A673 (cell line): ENCODE measurements at regions of chr2 and their contacts with region 1.

Region 1: DNA sequence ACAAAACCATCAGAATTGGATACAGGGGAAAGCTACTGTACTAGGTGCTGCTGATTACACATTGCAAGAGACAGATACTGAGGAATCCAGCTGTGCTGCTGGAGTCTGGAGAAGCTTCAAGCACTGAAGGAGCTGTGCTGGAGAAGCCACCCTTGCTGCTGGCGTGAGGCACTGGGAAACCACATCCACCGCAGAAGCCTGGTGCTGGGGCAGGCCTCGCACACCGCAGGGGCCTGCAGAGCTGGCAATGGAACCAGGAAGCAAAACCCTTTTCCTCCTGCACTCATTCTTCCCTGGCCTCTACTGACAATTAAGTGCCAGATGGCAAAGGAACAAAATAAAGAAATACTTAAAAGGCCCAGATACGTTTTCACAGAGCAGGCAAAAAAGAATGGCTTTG is 94.4 kb upstream of the MSH6 start:
- DNase-seq: peak; percentile 14
- H3K4me3 ChIP-seq: no peak overlapping the region
- H3K27ac ChIP-seq: no peak overlapping the region
- H3K4me1 ChIP-seq: no peaks in the 10 kb centered on the region
- H3K27me3 ChIP-seq: no peaks in the 10 kb centered on the region
- CTCF ChIP-seq: no peak

Region 2: GRCh38 chr2:47534179-47534919 is 154.2 kb before region 1 on chr2:
- CTCF ChIA-PET with region 1: no interaction called
- POLR2A ChIA-PET with region 1: interaction called, 11 read pairs
- intact Hi-C with region 1: no loop called
- DNase-seq: peak; percentile 82
- H3K4me3 ChIP-seq: no peak overlapping the region
- H3K27ac ChIP-seq: no peak overlapping the region
- H3K4me1 ChIP-seq: peaks cover 15% of the 10 kb centered on the region
- H3K27me3 ChIP-seq: no peaks in the 10 kb centered on the region
- CTCF ChIP-seq: no peak

Region 3: DNA sequence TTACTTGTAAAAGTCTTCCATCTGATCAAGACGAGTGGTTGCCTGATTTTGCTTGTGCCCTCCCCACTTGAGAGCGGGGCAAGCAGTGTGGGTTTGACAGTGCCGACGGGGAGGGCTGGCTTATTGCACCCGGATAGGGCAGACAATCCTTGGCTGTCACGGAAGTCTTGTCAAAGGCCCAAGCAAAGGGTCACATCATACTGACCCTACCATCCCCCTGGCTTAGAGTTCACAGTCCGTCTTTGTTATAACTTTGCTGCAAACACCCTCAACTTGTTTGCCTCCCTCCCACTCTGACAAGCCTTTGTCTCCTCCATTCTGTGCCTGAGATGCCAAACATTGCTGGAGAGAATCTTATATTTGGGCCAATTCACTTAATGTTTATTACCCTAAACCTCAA is 71.5 kb before region 1 on chr2:
- CTCF ChIA-PET with region 1: no interaction called
- POLR2A ChIA-PET with region 1: no interaction called
- intact Hi-C with region 1: no loop called
- DNase-seq: no peak
- H3K4me3 ChIP-seq: no peak overlapping the region
- H3K27ac ChIP-seq: no peak overlapping the region
- H3K4me1 ChIP-seq: no peaks in the 10 kb centered on the region
- H3K27me3 ChIP-seq: no peaks in the 10 kb centered on the region
- CTCF ChIP-seq: no peak